Keratinocyte (primary cell): ENCODE measurements at regions of chr5 and their contacts with region 1.

Region 1: DNA sequence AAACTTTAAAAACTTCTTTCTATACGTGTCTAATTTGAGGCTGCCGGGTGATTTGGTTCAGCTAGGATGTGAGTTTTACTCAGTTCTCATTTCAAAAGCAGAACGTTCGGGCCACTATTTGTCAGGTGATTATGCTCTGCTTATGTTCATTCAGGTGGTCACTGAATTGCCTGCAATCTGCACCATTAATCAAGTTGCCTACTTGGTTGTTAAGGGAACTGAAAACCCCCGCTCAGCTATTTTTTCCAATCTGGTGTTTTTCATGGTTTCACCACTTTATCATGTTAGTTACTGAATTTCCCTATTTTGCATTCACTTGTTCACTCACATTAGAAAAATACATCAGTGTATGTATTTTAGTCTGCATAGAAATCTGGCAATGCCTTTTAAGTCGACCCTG is 523.0 kb downstream of the CSNK1G3 start:
- DNase-seq: no peak
- H3K4me3 ChIP-seq: no peak overlapping the region
- H3K27ac ChIP-seq: no peak overlapping the region
- H3K4me1 ChIP-seq: no peaks in the 10 kb centered on the region
- H3K27me3 ChIP-seq: no peaks in the 10 kb centered on the region
- CTCF ChIP-seq: no peak

Region 2: DNA sequence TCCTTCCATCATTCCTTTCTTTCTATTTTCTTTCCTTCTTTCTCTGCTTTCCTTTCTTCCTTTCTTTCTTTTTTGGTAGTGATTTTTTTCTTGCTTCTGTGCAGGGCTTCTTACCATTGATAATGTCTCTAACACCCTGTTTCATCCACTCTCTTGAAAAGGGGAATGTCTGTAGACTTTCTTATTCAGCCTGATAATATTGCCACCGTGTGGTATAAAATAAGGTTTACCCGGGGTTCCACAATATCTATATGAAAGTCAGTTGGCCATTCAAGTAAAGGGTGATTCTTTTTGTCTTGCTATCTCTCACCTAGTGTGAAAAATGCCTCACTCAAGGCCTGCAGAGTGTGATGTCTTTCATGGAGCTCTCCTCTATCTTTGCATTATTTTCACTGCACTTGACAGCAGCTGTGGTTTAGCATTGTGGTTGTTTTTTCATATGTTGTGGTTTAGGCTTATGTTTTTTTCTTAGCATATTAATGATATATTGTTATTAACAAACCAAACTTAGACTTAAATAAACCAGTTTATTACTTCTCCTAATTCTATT is 369.1 kb before region 1 on chr5:
- dilution Hi-C with region 1: loop called (anchors 10 kb)
- DNase-seq: no peak
- H3K4me3 ChIP-seq: no peak overlapping the region
- H3K27ac ChIP-seq: no peak overlapping the region
- H3K4me1 ChIP-seq: no peaks in the 10 kb centered on the region
- H3K27me3 ChIP-seq: no peaks in the 10 kb centered on the region
- CTCF ChIP-seq: no peak

Region 3: DNA sequence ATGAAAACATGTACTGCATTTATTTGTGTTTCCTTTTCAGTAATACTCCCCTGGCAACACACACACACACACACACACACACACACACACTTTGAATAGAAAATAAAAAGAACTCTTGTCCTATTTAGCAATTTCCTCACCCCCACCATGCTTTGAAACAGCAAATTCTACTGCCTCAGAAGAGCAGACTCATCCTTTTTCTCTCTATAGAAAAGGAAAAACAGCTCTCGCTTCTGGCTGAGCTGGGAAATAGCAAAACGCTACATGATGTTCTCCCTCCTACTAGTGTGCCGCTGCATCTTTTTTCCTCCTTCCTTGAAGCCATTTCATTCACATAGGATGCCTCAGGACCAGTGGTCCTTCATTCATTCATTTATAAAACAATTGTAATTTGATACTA is 69.3 kb before region 1 on chr5:
- dilution Hi-C with region 1: no loop called
- DNase-seq: no peak
- H3K4me3 ChIP-seq: no peak overlapping the region
- H3K27ac ChIP-seq: no peak overlapping the region
- H3K4me1 ChIP-seq: no peaks in the 10 kb centered on the region
- H3K27me3 ChIP-seq: no peaks in the 10 kb centered on the region
- CTCF ChIP-seq: no peak